ENCODE measurements at regions of chr19 and their contacts with region 1.

Region 1: GRCh38 chr19:39187559-39187957 is 9.2 kb upstream of the NCCRP1 start:
- DNase-seq: no peak
- H3K4me3 ChIP-seq: no peak overlapping the region
- H3K27ac ChIP-seq: no peak overlapping the region
- H3K4me1 ChIP-seq: no peaks in the 10 kb centered on the region
- H3K27me3 ChIP-seq: peaks cover 0 to 20% (median 6%) of the 10 kb centered on the region in 3 donors
- CTCF ChIP-seq: peak in 1 of 4 experiments; percentile 38
- EP300 ChIP-seq: no peak
- POLR2A ChIP-seq: no peak

Region 2: GRCh38 chr19:38993271-38993670 is 194.3 kb before region 1 on chr19:
- intact Hi-C with region 1: no loop called
- DNase-seq: no peak
- H3K4me3 ChIP-seq: no peak overlapping the region
- H3K27ac ChIP-seq: no peak overlapping the region
- H3K4me1 ChIP-seq: no peaks in the 10 kb centered on the region
- H3K27me3 ChIP-seq: no peaks in the 10 kb centered on the region
- CTCF ChIP-seq: no peak
- EP300 ChIP-seq: no peak
- POLR2A ChIP-seq: no peak

Region 3: DNA sequence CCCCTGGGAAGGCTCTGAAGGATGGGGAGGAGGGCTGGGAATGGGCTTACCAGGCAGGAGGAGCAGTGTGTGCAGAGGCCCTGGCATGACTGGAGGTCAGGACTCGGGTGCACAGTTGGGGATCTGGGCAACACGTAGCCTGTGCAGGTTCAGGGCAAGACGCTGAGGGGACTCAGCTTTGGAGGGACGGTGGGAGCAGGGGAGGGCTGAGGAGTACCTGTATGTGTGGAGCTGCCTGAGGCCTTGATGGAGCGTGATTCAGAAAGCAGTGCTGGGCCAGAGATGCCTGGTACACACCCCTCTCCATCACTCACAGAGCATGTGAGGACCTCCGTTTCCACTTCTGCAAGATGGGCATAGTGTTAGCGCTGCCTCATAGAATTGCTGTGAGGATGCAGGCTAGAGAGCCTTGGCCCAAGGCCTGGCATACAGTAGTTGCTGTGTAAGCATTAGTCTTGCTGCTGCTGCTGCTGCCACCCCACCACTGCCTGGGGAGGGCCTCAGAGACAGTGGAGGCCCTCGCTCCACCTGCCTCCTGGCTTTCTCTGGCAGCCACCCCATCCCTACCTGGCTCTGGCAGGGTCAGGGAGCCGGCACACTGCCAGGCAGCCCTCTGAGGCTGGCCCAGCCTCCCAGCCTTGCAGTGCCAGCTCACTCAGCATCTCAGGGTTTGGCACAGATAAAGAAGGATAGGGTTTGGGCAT is 59.6 kb before region 1 on chr19:
- intact Hi-C with region 1: no loop called
- DNase-seq: no peak
- H3K4me3 ChIP-seq: no peak overlapping the region
- H3K27ac ChIP-seq: peak overlapping the region; percentile 4 to 90 (median 87)
- H3K4me1 ChIP-seq: peaks cover 0 to 74% (median 74%) of the 10 kb centered on the region in 4 donors
- H3K27me3 ChIP-seq: no peaks in the 10 kb centered on the region
- CTCF ChIP-seq: no peak
- EP300 ChIP-seq: no peak
- POLR2A ChIP-seq: no peak

Region 4: DNA sequence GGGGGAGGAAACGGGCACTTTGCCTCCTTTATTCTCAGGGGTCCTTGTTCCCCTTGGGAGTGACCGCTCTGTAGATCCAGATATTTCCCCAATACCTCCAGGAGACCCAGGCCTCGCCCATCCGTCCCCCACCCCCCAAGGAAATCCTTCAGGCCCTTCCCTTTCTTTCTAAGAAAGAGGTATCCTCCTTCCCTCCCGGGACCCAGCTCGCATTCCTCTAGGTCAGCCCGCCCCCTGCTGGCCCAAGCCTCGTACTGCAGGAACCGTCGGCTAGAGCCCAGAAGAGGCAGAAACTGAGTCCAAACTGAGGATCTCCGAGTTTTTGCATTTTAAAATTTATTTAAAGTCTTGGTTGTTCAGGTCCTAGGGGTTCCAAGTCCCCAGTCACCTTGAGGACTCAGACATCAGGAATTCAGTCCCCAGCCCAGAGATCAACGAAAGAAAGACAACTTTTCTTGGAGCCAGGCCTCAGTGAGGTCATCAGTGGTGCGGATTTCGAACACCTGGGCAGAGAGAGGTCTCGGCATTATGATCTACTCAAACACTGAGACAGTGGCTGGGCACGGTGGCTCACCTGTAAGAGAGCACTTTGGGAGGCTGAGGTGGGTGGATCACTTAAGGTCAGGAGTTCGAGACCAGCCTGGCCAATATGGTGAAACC is 140.6 kb after region 1 on chr19:
- intact Hi-C with region 1: loop called (anchors 1 kb)
- DNase-seq: peak; percentile 91
- H3K4me3 ChIP-seq: no peak overlapping the region
- H3K27ac ChIP-seq: no peak overlapping the region
- H3K4me1 ChIP-seq: no peaks in the 10 kb centered on the region
- H3K27me3 ChIP-seq: no peaks in the 10 kb centered on the region
- CTCF ChIP-seq: peak; percentile 85 to 96 (median 92)
- EP300 ChIP-seq: no peak
- POLR2A ChIP-seq: no peak

Measured in sigmoid colon (tissue), 7 donors.